WTC11 (cell line): ENCODE measurements at regions of chr5 and their contacts with region 1.

Region 1: DNA sequence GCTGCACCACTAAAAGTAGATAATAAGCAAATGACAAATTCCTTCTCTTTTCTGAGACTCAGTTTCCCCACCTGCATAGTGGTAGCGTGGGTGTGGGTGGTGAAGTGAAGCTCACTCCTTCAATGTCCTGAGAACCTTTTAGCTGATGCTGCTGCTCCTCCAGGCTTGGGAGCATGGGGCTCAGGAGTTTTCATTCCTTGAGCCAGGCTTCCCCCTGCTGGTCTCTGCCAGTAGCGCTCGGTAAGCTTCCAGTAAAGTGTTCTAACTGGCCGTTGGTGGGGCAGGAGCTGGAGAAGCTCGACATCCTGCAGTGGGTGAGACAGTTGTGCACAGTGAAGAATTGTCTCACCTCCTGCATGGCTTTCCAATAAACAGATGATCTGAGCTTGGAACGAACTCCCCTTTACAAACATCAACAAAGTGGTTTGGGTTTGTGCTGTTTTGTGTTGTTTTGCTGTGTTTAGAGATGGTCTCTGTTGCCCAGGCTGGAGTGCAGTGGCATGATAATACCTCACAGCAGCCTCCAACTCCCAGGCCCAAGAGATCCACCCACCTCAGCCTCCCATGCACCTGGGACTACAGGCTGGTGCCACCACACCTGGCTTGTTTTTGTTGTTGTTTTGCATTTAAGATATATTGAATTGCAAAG is 34.6 kb downstream of the SPARC start:
- DNase-seq: peak; percentile 88
- ATAC-seq: peak; percentile 99
- H3K4me3 Mint-ChIP-seq: no peak overlapping the region
- H3K27ac Mint-ChIP-seq: no peak overlapping the region
- H3K4me1 Mint-ChIP-seq: peaks cover 4% of the 10 kb centered on the region
- H3K27me3 Mint-ChIP-seq: no peaks in the 10 kb centered on the region
- CTCF ChIP-seq: peak; percentile 71

Region 2: GRCh38 chr5:151252762-151253604 is 399.1 kb before region 1 on chr5 and contains the start of gene GM2A:
- CTCF ChIA-PET with region 1: interaction called, 16 read pairs
- POLR2A ChIA-PET with region 1: no interaction called
- DNase-seq: peak; percentile 100
- ATAC-seq: peak; percentile 96
- H3K4me3 Mint-ChIP-seq: peak within 1 kb of the TSS; percentile 90
- H3K27ac Mint-ChIP-seq: peak within 1 kb of the TSS; percentile 92
- H3K4me1 Mint-ChIP-seq: peaks cover 35% of the 10 kb centered on the region
- H3K27me3 Mint-ChIP-seq: peaks cover 6% of the 10 kb centered on the region
- CTCF ChIP-seq: no peak
- total RNA-seq, gene GM2A: 33.1 to 36.2 TPM (median 33.2 TPM) in 3 replicates

Region 3: DNA sequence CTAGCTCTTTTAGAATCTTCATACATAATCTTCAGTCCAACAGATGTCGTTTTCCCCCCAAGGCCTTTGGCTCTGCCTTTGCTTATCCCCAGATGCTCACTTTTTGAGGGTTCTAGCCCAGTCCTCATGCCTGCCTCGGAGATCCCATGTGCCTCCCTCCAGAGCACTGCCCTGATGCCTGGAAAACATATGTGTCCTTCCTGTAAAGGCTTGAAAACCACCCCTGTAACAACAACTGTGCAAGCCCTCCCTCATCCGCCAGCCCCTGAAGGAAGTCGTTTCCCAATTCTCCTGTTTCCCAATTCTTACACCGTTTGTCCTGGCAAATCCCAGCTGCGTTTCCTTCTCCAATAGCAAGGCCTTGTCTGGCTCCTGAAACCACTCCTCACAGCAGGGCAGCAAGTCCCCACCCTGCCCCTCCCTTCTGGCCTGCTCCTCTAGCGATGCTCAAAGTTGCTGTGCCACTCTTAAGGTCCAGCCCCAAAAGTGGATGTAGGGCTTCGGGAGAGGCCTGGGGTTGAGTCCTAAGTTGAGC is 152.6 kb before region 1 on chr5:
- CTCF ChIA-PET with region 1: interaction called, 16 read pairs
- POLR2A ChIA-PET with region 1: no interaction called
- DNase-seq: no peak
- ATAC-seq: no peak
- H3K4me3 Mint-ChIP-seq: no peak overlapping the region
- H3K27ac Mint-ChIP-seq: peak overlapping the region; percentile 46
- H3K4me1 Mint-ChIP-seq: peaks cover 48% of the 10 kb centered on the region
- H3K27me3 Mint-ChIP-seq: no peaks in the 10 kb centered on the region
- CTCF ChIP-seq: no peak

Region 4: GRCh38 chr5:151550146-151550545 is 102.0 kb before region 1 on chr5:
- CTCF ChIA-PET with region 1: interaction called, 13 read pairs
- POLR2A ChIA-PET with region 1: no interaction called
- DNase-seq: no peak
- ATAC-seq: no peak
- H3K4me3 Mint-ChIP-seq: no peak overlapping the region
- H3K27ac Mint-ChIP-seq: no peak overlapping the region
- H3K4me1 Mint-ChIP-seq: 0 out of 2 replicates have a peak, but pooled peaks cover 4% of the 10 kb centered on the region
- H3K27me3 Mint-ChIP-seq: no peaks in the 10 kb centered on the region
- CTCF ChIP-seq: no peak

Region 5: DNA sequence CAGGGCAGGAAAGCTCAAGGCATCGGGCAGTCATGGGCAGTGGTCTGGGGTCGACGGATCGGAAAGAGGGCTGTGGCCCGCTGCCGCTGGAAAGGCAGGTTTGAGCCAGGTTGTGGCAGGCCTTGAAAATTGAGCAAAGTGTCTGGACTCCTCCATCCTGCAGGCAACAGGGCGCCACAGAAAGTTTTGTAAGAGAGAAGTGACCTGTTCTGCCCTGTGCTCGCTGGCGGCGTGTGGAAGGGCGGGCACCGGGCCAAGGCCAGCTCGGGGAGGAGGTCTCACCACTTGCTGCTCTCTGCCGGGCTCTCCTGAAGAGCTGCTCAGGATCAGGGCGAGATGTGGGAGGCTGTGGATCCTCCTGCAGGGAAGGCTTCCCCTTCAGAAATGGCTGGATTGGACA is 19.6 kb before region 1 on chr5:
- CTCF ChIA-PET with region 1: interaction called, 12 read pairs
- POLR2A ChIA-PET with region 1: no interaction called
- DNase-seq: no peak
- ATAC-seq: no peak
- H3K4me3 Mint-ChIP-seq: no peak overlapping the region
- H3K27ac Mint-ChIP-seq: no peak overlapping the region
- H3K4me1 Mint-ChIP-seq: 0 out of 2 replicates have a peak, but pooled peaks cover 4% of the 10 kb centered on the region
- H3K27me3 Mint-ChIP-seq: peaks cover 19% of the 10 kb centered on the region
- CTCF ChIP-seq: no peak

Region 6: GRCh38 chr5:151740336-151740942 is 88.3 kb after region 1 on chr5:
- CTCF ChIA-PET with region 1: interaction called, 167 read pairs
- POLR2A ChIA-PET with region 1: interaction called, 4 read pairs
- DNase-seq: peak; percentile 56
- ATAC-seq: peak; percentile 61
- H3K4me3 Mint-ChIP-seq: no peak overlapping the region; the same call in 1 of the 2 replicates
- H3K27ac Mint-ChIP-seq: peak overlapping the region; percentile 89
- H3K4me1 Mint-ChIP-seq: peaks cover 17% of the 10 kb centered on the region
- H3K27me3 Mint-ChIP-seq: no peaks in the 10 kb centered on the region
- CTCF ChIP-seq: peak; percentile 92

Region 7: DNA sequence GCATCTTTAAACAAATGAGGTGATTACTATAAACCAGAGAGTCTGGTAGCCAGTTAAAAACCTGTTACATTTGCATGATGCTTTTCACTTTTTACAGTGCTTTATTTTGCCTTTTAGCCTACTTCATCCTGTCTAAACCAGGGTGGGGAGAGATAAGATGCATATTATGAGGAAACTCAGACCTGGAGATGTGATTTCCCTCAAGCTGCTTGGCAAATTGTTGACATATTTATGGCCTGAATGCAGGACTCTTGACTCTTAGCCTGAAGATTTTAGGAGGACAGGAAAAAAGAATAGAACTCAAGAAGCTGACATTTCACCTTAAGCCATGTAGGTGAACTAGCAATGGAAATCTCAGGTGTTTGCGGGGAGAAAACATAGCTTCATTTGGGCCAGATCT is 550.2 kb after region 1 on chr5:
- CTCF ChIA-PET with region 1: no interaction called
- POLR2A ChIA-PET with region 1: no interaction called
- DNase-seq: no peak
- ATAC-seq: no peak
- H3K4me3 Mint-ChIP-seq: no peak overlapping the region
- H3K27ac Mint-ChIP-seq: no peak overlapping the region
- H3K4me1 Mint-ChIP-seq: no peaks in the 10 kb centered on the region
- H3K27me3 Mint-ChIP-seq: peaks cover 4% of the 10 kb centered on the region; the same call in 1 of the 2 replicates
- CTCF ChIP-seq: no peak

Region 8: GRCh38 chr5:152221721-152222629 is 569.9 kb after region 1 on chr5:
- CTCF ChIA-PET with region 1: no interaction called
- POLR2A ChIA-PET with region 1: no interaction called
- DNase-seq: no peak
- ATAC-seq: no peak
- H3K4me3 Mint-ChIP-seq: no peak overlapping the region
- H3K27ac Mint-ChIP-seq: no peak overlapping the region
- H3K4me1 Mint-ChIP-seq: no peaks in the 10 kb centered on the region
- H3K27me3 Mint-ChIP-seq: no peaks in the 10 kb centered on the region; the same call in 1 of the 2 replicates
- CTCF ChIP-seq: no peak